ENCODE measurements at regions of chr14 and their contacts with region 1.

Region 1: DNA sequence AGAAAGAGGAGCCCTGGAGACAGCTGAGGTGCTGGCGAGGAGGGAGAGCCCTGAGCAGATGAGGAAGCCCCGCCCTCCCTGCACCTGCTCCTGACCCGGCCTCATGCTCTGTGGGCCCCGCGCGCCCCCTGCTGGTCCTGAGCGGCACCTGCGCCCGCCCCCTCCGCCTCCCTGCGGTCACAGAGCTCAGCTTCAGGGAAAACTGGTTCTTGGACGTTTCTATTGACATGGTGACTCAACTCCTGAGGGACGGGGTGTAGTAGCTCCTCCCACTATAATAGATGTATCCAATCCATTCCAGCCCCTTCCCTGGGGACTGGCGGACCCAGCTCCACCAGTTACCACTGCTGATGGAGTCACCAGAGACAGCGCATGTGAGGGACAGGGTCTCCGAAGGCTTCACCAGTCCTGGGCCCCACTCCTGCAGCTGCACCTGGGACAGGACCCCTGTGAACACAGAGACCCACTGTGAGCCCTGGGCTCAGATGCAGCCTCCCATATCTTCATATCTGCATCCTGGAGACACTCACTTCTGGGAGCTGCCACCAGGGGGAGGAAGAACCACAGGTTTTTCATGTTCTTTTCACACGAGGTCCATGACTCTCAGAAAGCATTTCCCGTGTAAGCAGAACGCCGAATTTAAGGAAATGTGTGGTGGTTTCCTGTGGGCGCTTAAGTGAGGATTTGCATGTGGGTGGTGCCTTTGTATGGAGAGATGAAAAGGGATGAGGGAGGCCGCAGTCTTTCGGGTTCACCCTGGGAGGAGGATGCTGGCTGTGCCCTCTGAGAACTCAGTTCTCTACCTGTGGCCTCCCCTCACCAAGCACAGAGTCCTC is 1346.4 kb downstream of the TMEM121 start:
- DNase-seq: peak; percentile 88
- ATAC-seq: peak; percentile 86
- H3K4me3 Mint-ChIP-seq: peak overlapping the region; percentile 21
- H3K27ac Mint-ChIP-seq: no peak overlapping the region
- H3K4me1 Mint-ChIP-seq: peaks cover 29% of the 10 kb centered on the region
- H3K27me3 Mint-ChIP-seq: peaks cover 19% of the 10 kb centered on the region

Region 2: GRCh38 chr14:106652502-106652901 is 220.3 kb before region 1 on chr14:
- CTCF ChIA-PET with region 1: no interaction called
- POLR2A ChIA-PET with region 1: no interaction called
- DNase-seq: no peak
- ATAC-seq: no peak
- H3K4me3 Mint-ChIP-seq: no peak overlapping the region
- H3K27ac Mint-ChIP-seq: no peak overlapping the region
- H3K4me1 Mint-ChIP-seq: peaks cover 6% of the 10 kb centered on the region
- H3K27me3 Mint-ChIP-seq: peaks cover 36% of the 10 kb centered on the region

Region 3: GRCh38 chr14:106823552-106823951 is 49.3 kb before region 1 on chr14:
- CTCF ChIA-PET with region 1: interaction called, 24 read pairs
- POLR2A ChIA-PET with region 1: no interaction called
- DNase-seq: no peak
- ATAC-seq: no peak
- H3K4me3 Mint-ChIP-seq: no peak overlapping the region
- H3K27ac Mint-ChIP-seq: no peak overlapping the region
- H3K4me1 Mint-ChIP-seq: no peaks in the 10 kb centered on the region
- H3K27me3 Mint-ChIP-seq: peaks cover 33% of the 10 kb centered on the region

Region 4: DNA sequence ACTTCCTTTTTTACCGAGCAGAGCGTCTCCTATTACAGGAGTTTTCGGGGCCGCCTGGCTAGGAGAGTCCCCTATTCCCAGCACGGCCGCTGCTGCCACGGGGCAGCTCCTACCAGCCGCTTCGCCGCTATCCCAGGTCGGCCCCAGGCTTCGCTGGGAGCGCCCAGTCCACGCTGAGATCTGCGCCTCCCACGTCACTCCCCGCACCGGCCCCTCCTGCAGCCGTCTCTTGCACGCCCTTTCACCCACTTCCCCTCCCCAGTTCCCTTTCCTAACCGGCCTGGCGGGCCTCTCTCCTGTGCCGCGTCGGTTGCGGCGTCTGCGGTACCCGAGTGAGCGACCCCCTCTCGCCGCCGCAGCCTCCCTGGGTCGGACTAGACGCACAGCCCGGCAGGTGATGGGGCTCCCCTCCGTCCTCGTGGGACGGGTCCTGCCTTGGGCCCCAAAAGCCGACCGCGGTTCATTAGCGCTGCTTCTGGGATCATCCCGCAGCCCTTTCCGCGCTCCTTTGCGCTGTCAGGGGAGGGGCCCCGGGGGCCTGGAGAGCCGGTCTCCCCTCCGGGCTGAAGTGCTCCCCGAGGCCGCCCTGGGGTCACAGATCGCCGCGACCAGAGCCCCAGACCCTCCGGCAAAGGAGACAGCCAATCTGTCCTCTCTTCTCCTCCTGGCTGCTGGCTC is 28.1 kb before region 1 on chr14:
- CTCF ChIA-PET with region 1: interaction called, 193 read pairs
- POLR2A ChIA-PET with region 1: interaction called, 4 read pairs
- DNase-seq: peak; percentile 70
- ATAC-seq: peak; percentile 77
- H3K4me3 Mint-ChIP-seq: peak overlapping the region; percentile 89
- H3K27ac Mint-ChIP-seq: peak overlapping the region; percentile 86
- H3K4me1 Mint-ChIP-seq: peaks cover 35% of the 10 kb centered on the region
- H3K27me3 Mint-ChIP-seq: peaks cover 9% of the 10 kb centered on the region

Region 5: GRCh38 chr14:106883218-106883692 is 10.4 kb after region 1 on chr14:
- CTCF ChIA-PET with region 1: interaction called, 35 read pairs
- POLR2A ChIA-PET with region 1: no interaction called
- DNase-seq: peak; percentile 59
- ATAC-seq: peak; percentile 60
- H3K4me3 Mint-ChIP-seq: no peak overlapping the region
- H3K27ac Mint-ChIP-seq: no peak overlapping the region
- H3K4me1 Mint-ChIP-seq: no peaks in the 10 kb centered on the region
- H3K27me3 Mint-ChIP-seq: peaks cover 5% of the 10 kb centered on the region

Measured in activated CD8-positive, alpha-beta T cell treated with anti-CD3 and anti-CD28 coated beads, Interleukin-2, amount 10 ng/mL, durations not matched to agents 7 days and 5 days (primary cell).